WTC11 (cell line): ENCODE measurements at regions of chr10 and their contacts with region 1.

Region 1: GRCh38 chr10:100569618-100570473 is 34.1 kb downstream of the HIF1AN start:
- DNase-seq: peak; percentile 62
- ATAC-seq: peak; percentile 82
- H3K4me3 Mint-ChIP-seq: no peak overlapping the region
- H3K27ac Mint-ChIP-seq: no peak overlapping the region
- H3K4me1 Mint-ChIP-seq: no peaks in the 10 kb centered on the region
- H3K27me3 Mint-ChIP-seq: peaks cover 35% of the 10 kb centered on the region
- CTCF ChIP-seq: no peak; the same call in 1 of the 2 replicates

Region 2: DNA sequence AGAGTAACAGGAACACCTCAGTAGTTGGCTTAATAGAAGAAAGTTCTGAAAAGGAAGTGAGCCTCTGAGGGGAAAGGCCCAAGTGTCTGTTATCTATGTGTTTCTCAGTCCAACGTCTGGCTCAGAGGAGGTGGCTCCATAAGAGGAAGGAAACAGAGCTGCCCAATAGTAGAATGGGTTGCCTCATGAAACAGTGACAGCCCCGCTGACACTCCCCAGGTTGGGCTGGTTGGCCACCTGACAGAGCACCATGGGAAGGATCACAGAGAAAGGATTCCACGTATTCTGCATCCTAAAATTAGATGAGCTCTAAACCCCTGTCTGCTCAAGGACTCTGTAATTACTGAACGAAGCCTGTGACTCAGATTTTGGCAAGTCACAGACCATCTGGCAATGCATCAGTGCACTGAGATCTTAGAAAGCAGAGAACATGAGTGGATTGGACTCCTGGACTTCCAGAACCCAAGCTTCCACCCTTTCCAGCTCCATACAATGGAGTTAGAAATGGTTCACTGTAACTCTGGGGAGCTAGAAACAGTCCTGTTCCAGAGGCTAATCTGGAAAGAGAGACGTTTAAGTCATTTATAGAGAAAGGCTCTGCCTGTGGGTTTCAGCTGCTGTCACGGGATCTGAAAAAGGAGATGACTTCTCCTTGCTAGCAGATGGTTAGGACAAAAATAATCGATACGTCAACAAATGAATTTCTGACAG is 242.7 kb before region 1 on chr10:
- CTCF ChIA-PET with region 1: no interaction called
- POLR2A ChIA-PET with region 1: no interaction called
- DNase-seq: no peak
- ATAC-seq: no peak
- H3K4me3 Mint-ChIP-seq: no peak overlapping the region
- H3K27ac Mint-ChIP-seq: no peak overlapping the region
- H3K4me1 Mint-ChIP-seq: no peaks in the 10 kb centered on the region
- H3K27me3 Mint-ChIP-seq: peaks cover 50% of the 10 kb centered on the region
- CTCF ChIP-seq: no peak

Region 3: GRCh38 chr10:100373298-100374136 is 196.3 kb before region 1 on chr10:
- CTCF ChIA-PET with region 1: no interaction called
- POLR2A ChIA-PET with region 1: no interaction called
- DNase-seq: peak; percentile 98
- ATAC-seq: peak; percentile 94
- H3K4me3 Mint-ChIP-seq: no peak overlapping the region
- H3K27ac Mint-ChIP-seq: no peak overlapping the region
- H3K4me1 Mint-ChIP-seq: peaks cover 21% of the 10 kb centered on the region
- H3K27me3 Mint-ChIP-seq: no peaks in the 10 kb centered on the region
- CTCF ChIP-seq: no peak

Region 4: DNA sequence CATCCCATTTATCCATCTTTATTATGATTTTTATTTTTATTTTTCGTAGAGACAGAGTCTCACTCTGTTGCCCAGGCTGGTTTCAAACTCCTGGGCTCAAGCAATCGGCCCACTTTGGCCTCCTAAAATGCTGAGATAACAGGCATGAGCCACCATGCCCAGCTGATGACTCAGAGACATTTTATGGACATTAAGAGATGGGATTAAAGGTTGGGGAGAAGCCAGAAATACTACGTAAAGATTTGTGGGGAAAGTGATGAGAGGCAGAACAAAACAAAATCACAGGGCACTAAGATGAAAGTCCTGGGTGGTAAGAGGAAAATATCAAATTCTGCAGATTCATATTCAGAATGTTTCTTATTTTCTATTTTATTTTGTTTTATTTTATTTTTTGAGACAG is 99.5 kb before region 1 on chr10:
- CTCF ChIA-PET with region 1: no interaction called
- POLR2A ChIA-PET with region 1: no interaction called
- DNase-seq: no peak
- ATAC-seq: no peak
- H3K4me3 Mint-ChIP-seq: no peak overlapping the region
- H3K27ac Mint-ChIP-seq: no peak overlapping the region
- H3K4me1 Mint-ChIP-seq: no peaks in the 10 kb centered on the region
- H3K27me3 Mint-ChIP-seq: peaks cover 90% of the 10 kb centered on the region
- CTCF ChIP-seq: no peak

Region 5: DNA sequence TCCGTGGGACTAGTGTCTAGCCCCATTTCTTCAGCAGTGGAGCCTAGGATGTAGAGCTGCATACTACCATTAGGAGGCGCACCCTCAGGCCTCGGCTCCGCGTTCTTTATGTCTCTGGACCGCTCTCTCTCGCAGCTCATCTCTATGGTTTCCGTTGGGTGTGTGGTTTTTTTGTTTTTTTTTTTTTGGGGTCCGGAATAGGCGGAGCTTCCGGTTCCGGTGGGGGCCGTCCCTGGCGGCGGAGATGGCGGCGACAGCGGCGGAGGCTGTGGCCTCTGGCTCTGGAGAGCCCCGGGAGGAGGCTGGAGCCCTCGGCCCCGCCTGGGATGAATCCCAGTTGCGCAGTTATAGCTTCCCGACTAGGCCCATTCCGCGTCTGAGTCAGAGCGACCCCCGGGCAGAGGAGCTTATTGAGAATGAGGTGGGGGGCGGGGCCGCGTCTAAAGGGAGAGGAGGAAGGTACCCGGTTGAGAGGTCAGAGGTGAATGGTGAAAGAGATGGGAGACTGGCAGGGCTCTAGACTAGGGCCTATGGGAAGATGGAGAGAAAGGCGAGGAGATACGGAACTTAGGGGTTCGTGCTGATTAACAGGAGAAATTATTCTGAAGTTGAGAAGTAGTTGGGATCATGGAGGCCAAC is 34.0 kb before region 1 on chr10 and contains the start of gene HIF1AN:
- CTCF ChIA-PET with region 1: interaction called, 42 read pairs
- POLR2A ChIA-PET with region 1: interaction called, 4 read pairs
- DNase-seq: peak; percentile 86
- ATAC-seq: peak; percentile 98
- H3K4me3 Mint-ChIP-seq: no peak within 1 kb of the TSS
- H3K27ac Mint-ChIP-seq: peak within 1 kb of the TSS; percentile 73
- H3K4me1 Mint-ChIP-seq: peaks cover 7% of the 10 kb centered on the region; the same call in 1 of the 2 replicates
- H3K27me3 Mint-ChIP-seq: no peaks in the 10 kb centered on the region
- CTCF ChIP-seq: peak; percentile 69
- total RNA-seq, gene HIF1AN: 49.9 to 58.3 TPM (median 53.9 TPM) in 3 replicates

Region 6: DNA sequence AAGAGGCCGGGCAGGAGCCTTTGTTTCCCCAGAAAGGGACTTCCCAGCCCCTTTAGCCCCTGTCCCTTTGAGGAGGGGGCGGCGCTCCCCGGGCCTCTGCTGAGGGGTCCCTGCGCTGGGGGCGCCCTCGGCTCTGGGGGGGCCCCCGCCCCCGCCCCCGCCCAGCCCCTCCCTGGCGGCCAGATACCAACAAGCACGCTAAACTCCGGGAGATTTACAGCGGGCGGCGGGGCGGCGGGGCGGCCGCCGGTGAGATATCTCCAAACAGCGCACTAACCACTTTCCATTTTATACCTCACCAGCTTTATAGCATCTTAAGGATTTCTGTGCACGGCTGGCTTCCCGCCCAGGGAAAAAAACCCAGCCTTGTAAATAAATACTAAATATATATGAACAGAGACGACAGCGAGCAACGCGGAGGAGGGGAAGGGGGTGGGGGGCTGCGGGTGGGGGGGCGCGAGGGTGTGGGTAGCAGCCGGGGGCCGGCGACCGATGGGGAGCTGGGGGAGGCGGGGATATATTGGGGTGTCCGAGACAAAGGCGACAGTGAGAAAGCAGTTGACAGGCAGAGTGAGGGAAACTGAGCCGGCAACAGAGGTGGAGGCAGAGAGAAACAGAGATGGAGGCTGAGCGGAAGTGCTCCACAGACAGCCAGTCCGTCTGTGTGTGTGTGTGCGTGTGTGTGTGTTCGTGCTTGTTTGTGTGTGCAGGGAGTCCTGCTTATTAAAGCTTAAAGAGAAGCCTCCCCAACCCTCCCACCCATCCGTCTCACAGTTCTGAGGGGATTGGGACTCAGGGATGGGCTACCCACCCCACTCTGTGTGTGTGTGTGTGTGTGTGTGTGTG is 51.7 kb after region 1 on chr10:
- CTCF ChIA-PET with region 1: interaction called, 24 read pairs
- POLR2A ChIA-PET with region 1: interaction called, 3 read pairs
- DNase-seq: no peak
- ATAC-seq: no peak
- H3K4me3 Mint-ChIP-seq: no peak overlapping the region
- H3K27ac Mint-ChIP-seq: no peak overlapping the region
- H3K4me1 Mint-ChIP-seq: peaks cover 23% of the 10 kb centered on the region
- H3K27me3 Mint-ChIP-seq: peaks cover 11% of the 10 kb centered on the region
- CTCF ChIP-seq: no peak

Region 7: GRCh38 chr10:100670828-100671479 is 101.1 kb after region 1 on chr10:
- CTCF ChIA-PET with region 1: interaction called, 10 read pairs
- POLR2A ChIA-PET with region 1: no interaction called
- DNase-seq: peak; percentile 77
- ATAC-seq: peak; percentile 67
- H3K4me3 Mint-ChIP-seq: peak overlapping the region; percentile 61
- H3K27ac Mint-ChIP-seq: no peak overlapping the region
- H3K4me1 Mint-ChIP-seq: peaks cover 28% of the 10 kb centered on the region
- H3K27me3 Mint-ChIP-seq: peaks cover 60% of the 10 kb centered on the region
- CTCF ChIP-seq: peak; percentile 92

Region 8: DNA sequence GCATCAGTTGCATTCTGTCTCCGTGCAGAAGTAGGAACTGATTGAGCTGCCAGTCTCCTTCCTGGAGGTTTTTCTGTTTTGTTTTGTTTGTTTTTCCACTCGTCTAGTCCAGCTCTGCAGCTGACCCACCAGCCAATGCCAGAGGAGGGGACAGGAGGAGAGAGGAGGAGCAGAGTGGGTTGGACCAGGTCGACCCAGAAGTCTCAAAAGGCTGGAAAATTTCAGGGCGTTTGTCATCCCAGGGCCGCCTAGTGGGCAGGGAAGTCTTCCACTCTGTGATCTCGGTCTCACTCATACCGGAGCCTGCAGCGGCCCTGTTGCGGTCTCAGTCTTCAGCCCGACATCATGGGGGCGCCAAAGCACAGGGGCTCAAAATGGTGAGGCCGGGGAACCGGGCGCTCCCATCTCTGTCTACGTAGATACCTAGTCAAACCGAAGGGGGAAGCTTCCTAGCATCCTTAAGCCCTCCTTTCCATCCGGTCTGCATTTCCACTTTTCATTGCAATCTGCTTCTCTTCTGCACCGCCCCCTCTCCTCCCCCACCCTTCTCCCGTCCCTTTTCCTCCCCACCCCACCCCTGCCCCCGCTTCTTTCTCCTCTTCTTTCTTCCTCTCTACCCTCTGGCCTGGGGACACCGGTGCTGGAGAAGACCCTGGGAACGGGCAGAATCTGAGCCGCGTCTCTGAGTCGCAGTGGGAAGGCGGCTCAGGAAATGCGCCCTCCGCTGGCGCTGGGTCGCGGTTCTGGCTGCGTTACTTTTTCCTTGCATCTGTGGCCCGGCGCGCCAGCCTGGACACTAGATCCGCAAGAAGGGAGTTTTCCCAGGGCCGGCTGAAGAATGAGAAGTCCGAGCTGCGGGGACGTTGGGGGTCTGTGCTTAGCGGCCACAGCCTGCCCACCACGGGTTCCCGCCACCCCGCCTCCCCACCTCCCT is 159.3 kb after region 1 on chr10:
- CTCF ChIA-PET with region 1: interaction called, 14 read pairs
- POLR2A ChIA-PET with region 1: no interaction called
- DNase-seq: peak; percentile 80
- ATAC-seq: peak; percentile 61
- H3K4me3 Mint-ChIP-seq: peak overlapping the region; percentile 53
- H3K27ac Mint-ChIP-seq: no peak overlapping the region
- H3K4me1 Mint-ChIP-seq: peaks cover 40% of the 10 kb centered on the region
- H3K27me3 Mint-ChIP-seq: peaks cover 100% of the 10 kb centered on the region
- CTCF ChIP-seq: peak; percentile 23; the same call in 1 of the 2 replicates

Region 9: DNA sequence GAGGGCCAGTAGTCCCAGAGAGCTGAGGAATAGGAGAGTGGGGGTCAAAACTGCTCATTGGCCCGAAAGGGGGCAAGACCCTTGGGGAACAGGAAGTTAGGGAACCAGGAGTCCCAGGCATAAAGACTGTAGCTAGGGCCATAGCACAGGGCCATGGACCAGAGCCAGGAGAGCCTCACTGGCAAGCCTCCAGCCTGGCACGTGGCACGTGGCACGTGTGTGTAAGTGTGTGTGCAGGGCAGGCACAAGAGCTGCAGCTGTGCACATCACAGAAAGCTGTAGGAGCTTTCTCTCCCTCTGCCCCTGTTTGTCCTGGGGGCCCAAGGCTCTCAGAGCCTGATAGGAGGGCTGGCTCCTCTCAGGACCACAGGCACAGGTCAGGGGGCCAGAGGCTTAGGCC is 295.1 kb after region 1 on chr10:
- CTCF ChIA-PET with region 1: interaction called, 14 read pairs
- POLR2A ChIA-PET with region 1: no interaction called
- DNase-seq: no peak
- ATAC-seq: no peak
- H3K4me3 Mint-ChIP-seq: no peak overlapping the region
- H3K27ac Mint-ChIP-seq: no peak overlapping the region
- H3K4me1 Mint-ChIP-seq: peaks cover 12% of the 10 kb centered on the region
- H3K27me3 Mint-ChIP-seq: peaks cover 69% of the 10 kb centered on the region
- CTCF ChIP-seq: no peak

Region 10: DNA sequence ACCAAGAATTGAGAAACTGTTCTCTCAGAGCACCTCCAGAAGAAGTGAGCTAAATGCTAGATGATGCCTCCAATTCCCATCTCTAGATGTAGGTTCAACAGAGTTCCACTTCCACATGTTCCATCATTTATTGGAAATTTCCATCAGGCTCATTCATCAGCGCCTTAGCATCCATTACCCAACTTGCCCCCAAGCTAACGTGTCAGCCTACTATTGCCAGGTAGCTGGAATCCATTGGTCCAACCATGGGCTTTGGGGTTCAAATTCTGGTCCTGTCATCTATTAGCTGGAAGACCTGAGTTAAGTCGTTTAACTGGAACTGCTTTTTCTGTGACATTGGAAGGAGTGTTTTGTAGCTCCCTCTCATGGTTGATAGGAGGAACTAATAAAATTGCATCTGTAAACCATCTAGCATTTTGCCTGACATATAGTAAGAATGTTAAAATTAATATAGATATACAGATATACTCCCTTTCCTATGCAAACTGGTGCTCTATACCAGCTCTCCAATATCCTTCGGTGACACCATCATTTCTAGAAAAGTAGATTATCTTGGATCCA is 319.0 kb after region 1 on chr10:
- CTCF ChIA-PET with region 1: interaction called, 15 read pairs
- POLR2A ChIA-PET with region 1: no interaction called
- DNase-seq: no peak
- ATAC-seq: peak; percentile 27; the same call in 1 of the 2 replicates
- H3K4me3 Mint-ChIP-seq: no peak overlapping the region
- H3K27ac Mint-ChIP-seq: no peak overlapping the region
- H3K4me1 Mint-ChIP-seq: peaks cover 14% of the 10 kb centered on the region
- H3K27me3 Mint-ChIP-seq: peaks cover 6% of the 10 kb centered on the region; the same call in 1 of the 2 replicates
- CTCF ChIP-seq: no peak